ENCODE measurements at regions of chr13 and their contacts with region 1.

Region 1: DNA sequence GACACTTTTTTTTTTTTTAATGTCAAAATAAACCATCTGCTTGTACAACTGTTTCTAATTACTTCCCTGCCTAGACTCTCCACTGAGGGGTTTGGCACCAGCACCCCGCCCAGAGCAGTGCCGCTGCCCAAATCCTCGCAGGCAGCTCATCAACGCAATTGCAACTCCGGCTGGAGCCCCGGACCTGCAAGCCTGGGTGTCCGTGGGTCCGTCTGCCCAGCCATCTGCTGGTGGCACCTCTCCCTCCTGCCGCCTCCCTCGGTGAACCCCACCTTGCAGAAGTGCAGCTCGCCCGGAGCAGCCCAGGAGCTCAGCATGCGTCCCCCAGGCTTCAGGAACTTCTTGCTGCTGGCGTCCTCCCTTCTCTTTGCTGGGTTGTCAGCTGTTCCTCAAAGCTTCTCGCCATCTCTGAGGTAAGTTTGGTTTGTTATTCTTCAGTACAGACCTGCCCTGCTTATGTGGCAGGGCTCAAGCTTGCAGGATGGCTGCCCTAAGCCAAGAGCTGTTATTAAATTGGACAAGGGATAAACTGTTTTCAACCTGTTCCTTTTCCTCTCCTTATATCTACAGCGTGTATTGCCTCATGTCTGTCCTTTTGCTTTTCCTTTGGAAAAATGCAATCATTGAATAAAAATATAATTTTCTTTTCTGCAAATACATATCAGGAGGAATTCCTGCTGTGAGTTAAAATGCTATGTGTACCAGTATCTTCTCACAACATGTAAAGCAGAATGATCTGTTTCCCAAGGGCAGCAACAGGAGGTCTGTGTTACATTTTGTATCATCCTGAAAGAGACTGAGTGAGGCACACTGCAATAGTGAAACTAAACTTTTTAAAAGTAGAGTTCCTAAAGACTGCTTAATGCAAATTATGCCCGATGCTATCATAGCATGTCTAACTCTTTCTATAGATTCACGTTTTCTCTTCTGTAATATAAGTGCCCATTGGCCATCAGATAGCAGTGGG is at the start of gene ITGBL1:
- DNase-seq: peak; percentile 41
- ATAC-seq: peak; percentile 12
- H3K4me3 ChIP-seq: peak within 1 kb of the TSS; percentile 85
- H3K27ac ChIP-seq: peak within 1 kb of the TSS; percentile 99
- H3K4me1 ChIP-seq: peaks cover 60% of the 10 kb centered on the region
- H3K27me3 ChIP-seq: no peaks in the 10 kb centered on the region
- CTCF ChIP-seq: no peak
- total RNA-seq, gene ITGBL1: 37.1 and 42.0 TPM in 2 replicates

Region 2: DNA sequence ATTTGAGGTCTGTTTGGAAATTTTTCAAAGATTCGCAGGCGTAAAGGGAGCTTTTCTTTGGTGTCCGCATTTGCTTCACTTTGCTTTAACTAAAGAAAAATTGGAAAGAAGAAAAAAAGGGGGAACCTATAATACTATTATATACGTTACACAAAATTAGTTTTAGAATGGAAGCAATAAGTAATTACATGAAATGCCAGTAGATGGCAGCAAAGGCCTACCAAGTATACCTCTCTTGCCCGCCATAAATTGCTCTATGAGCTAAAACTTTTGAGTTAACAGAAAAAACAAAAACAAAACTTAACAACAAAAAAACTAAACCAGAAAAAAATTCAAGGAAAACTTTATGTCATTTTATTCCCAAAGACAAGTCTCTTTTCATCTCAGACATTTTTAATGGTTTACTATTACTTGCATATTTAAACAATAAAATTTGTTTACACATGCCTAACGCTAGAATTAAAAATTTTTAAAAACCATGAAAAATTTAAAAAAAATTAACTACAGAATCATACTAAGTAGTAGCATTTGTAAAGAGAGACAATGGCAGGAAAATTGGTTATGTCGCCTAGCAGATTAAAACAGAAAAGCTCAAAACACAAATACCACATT is 307.9 kb before region 1 on chr13:
- CTCF ChIA-PET with region 1: no interaction called
- POLR2A ChIA-PET with region 1: no interaction called
- intact Hi-C with region 1: loop called (anchors 1 kb)
- DNase-seq: peak; percentile 74
- ATAC-seq: peak; percentile 68
- H3K4me3 ChIP-seq: no peak overlapping the region
- H3K27ac ChIP-seq: no peak overlapping the region
- H3K4me1 ChIP-seq: peaks cover 22% of the 10 kb centered on the region
- H3K27me3 ChIP-seq: no peaks in the 10 kb centered on the region
- CTCF ChIP-seq: peak; percentile 70

Region 3: DNA sequence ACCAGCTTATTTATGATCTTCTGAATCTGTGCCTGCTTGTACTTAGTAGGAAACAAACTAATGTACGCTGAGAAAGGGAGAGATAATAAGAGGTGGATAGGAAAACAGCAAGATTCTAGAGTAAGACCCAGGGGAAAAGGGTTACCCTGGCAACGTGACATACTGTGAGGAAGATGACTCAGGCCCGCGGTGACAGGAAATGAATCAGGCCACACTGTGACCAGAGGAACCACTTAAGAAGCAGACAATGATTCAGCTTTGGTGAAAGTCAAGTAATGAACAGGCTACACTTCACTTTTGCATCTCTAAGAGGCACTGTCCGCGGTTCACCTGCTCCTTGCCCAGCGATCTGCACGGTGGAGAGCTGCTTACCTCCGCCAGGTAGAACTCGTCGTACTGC is 194.7 kb before region 1 on chr13:
- CTCF ChIA-PET with region 1: no interaction called
- POLR2A ChIA-PET with region 1: no interaction called
- intact Hi-C with region 1: loop called (anchors 5 kb)
- DNase-seq: peak; percentile 90
- ATAC-seq: peak; percentile 92
- H3K4me3 ChIP-seq: peak overlapping the region; percentile 10; the same call in 1 of the 2 replicates
- H3K27ac ChIP-seq: peak overlapping the region; percentile 83
- H3K4me1 ChIP-seq: peaks cover 23% of the 10 kb centered on the region
- H3K27me3 ChIP-seq: no peaks in the 10 kb centered on the region
- CTCF ChIP-seq: peak; percentile 29; the same call in 1 of the 2 replicates

Region 4: DNA sequence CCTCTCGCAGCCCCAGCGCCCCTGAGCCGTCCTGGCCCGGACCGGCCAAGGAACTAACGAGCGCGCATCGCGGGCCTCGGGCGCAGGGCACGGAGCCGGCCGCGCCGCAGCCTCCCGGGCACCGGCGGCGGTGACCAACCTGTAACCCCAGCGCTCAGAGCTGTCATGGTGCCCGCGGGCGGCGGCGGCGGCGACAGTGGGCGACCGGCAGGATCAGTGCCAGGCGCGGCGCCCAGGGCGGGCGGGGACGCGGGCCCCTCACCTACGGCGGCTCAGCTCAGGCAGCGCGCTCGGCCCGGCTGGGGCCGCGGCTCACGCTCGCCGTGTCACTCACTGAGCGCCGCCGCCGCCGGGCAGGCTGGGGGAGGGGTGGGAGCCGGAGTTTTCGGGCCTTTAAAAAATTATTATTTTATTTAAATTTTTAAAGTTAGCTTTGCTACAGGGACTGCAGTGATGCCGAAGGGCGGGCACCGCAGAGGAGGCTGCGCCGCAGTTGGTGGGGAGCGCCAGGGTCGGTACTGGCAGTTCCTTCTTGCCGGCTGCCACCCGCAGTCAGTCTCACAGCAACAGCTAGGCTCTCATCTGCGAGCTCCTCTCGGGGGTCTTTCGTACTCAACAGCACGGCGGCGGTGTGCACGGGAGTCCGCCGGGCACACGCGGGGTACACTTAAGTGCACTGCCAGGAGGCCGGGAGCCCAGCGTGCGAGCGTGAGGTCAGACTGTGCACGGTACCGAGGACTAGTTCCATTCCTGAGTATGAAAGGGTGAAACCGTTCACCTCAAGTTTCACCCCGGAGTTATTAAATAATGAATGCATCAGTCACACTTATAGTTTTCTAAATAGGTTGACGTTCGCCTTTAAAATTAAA is 36.4 kb before region 1 on chr13 and contains the start of gene NALCN:
- CTCF ChIA-PET with region 1: no interaction called
- POLR2A ChIA-PET with region 1: interaction called, 3 read pairs
- intact Hi-C with region 1: loop called (anchors 2 kb)
- DNase-seq: peak; percentile 39
- ATAC-seq: peak; percentile 75
- H3K4me3 ChIP-seq: peak within 1 kb of the TSS; percentile 91
- H3K27ac ChIP-seq: peak within 1 kb of the TSS; percentile 90
- H3K4me1 ChIP-seq: peaks cover 22% of the 10 kb centered on the region
- H3K27me3 ChIP-seq: no peaks in the 10 kb centered on the region
- CTCF ChIP-seq: no peak
- total RNA-seq, gene NALCN: 6.4 and 11.8 TPM in 2 replicates

Region 5: GRCh38 chr13:101514788-101515187 is 62.0 kb after region 1 on chr13:
- CTCF ChIA-PET with region 1: interaction called, 3 read pairs
- POLR2A ChIA-PET with region 1: interaction called, 6 read pairs
- intact Hi-C with region 1: loop called (anchors 5 kb)
- DNase-seq: peak; percentile 75
- ATAC-seq: peak; percentile 38
- H3K4me3 ChIP-seq: no peak overlapping the region
- H3K27ac ChIP-seq: no peak overlapping the region
- H3K4me1 ChIP-seq: peaks cover 60% of the 10 kb centered on the region
- H3K27me3 ChIP-seq: no peaks in the 10 kb centered on the region
- CTCF ChIP-seq: peak; percentile 77

Region 6: DNA sequence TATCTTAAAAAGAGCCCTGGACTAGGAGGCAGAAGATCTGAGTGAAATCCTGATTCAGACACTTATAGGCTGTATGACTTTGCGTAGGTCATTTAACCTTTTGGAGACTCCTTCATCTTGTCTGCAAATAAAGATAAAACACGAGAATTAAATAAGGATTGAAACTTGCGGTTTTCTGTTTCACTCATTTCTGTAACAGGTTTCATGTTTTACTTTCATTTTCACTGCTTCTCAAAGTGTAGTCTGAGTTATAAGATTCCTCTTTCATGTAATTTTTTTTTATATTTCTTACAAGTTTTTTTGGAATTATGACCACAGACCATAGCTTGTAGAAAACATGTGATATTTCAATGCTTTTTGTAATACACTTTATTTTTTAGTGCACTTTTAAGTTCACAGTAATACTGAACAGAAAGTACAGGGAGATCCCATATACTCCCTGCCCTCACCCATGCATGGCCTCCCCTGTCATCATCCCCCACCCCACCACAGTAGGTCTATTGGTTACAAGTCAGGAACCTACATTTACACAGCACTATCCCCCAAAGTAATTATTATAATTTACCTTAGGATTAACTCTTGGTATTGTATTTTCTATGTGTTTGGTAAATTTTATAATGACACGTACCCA is 174.2 kb after region 1 on chr13:
- CTCF ChIA-PET with region 1: no interaction called
- POLR2A ChIA-PET with region 1: no interaction called
- intact Hi-C with region 1: loop called (anchors 5 kb)
- DNase-seq: peak; percentile 7
- ATAC-seq: peak; percentile 25
- H3K4me3 ChIP-seq: peak overlapping the region; percentile 64
- H3K27ac ChIP-seq: peak overlapping the region; percentile 76
- H3K4me1 ChIP-seq: peaks cover 52% of the 10 kb centered on the region
- H3K27me3 ChIP-seq: no peaks in the 10 kb centered on the region
- CTCF ChIP-seq: no peak

Region 7: DNA sequence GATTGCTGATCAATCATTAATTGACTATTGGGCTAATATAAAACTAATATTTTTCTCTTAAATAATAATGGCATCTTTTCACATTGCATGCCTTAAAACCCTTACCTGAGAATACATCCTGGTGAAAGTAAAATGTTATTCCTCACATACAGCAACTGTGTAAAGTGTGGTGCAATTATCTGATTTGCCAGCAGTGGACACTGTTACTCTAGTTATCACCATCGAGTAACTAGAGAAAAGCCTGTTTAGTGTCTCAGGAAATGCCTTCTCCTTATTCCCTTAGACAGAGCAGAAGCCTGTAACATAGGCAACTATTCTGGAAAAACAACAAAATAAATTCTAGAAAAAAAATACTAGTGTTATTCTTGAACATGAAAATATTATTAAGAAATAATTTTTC is 489.2 kb after region 1 on chr13:
- CTCF ChIA-PET with region 1: no interaction called
- POLR2A ChIA-PET with region 1: no interaction called
- intact Hi-C with region 1: no loop called
- DNase-seq: peak; percentile 54
- ATAC-seq: peak; percentile 87
- H3K4me3 ChIP-seq: no peak overlapping the region
- H3K27ac ChIP-seq: no peak overlapping the region
- H3K4me1 ChIP-seq: no peaks in the 10 kb centered on the region
- H3K27me3 ChIP-seq: peaks cover 33% of the 10 kb centered on the region
- CTCF ChIP-seq: peak; percentile 57

Region 8: GRCh38 chr13:102071711-102072110 is 618.9 kb after region 1 on chr13:
- CTCF ChIA-PET with region 1: no interaction called
- POLR2A ChIA-PET with region 1: no interaction called
- intact Hi-C with region 1: no loop called
- DNase-seq: no peak
- ATAC-seq: no peak
- H3K4me3 ChIP-seq: no peak overlapping the region
- H3K27ac ChIP-seq: no peak overlapping the region
- H3K4me1 ChIP-seq: no peaks in the 10 kb centered on the region
- H3K27me3 ChIP-seq: peaks cover 34% of the 10 kb centered on the region
- CTCF ChIP-seq: no peak